Activated CD8-positive, alpha-beta memory T cell treated with anti-CD3 and anti-CD28 coated beads, Interleukin-2, amount 10 ng/mL, durations not matched to agents 7 days and 5 days (primary cell): ENCODE measurements at regions of chr16 and their contacts with region 1.

Region 1: DNA sequence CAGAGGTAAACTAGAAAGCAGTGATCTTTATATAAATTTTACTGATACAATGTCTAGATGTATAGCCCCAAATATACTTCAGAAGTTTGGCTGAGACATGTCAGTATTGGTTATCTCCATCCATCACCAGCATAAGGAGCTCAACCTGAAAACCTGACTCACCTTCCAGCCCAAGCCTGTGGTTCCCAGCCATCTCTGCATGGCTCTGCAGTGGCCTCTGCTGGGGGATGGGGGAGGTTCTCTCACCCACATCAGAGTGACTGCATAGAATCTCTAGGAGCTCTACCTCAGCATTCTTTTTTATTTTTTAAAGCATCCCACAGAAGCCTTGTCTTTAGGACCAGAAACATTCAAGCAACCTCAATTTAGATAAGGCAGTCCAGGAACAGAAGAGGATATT is 27.3 kb downstream of the USP7 start:
- DNase-seq: peak; percentile 88
- ATAC-seq: peak; percentile 99
- H3K4me3 Mint-ChIP-seq: no peak overlapping the region
- H3K27ac Mint-ChIP-seq: peak overlapping the region; percentile 11
- H3K4me1 Mint-ChIP-seq: peaks cover 57% of the 10 kb centered on the region
- H3K27me3 Mint-ChIP-seq: no peaks in the 10 kb centered on the region

Region 2: GRCh38 chr16:8776129-8776584 is 160.3 kb before region 1 on chr16:
- CTCF ChIA-PET with region 1: no interaction called
- DNase-seq: no peak
- ATAC-seq: no peak
- H3K4me3 Mint-ChIP-seq: no peak overlapping the region
- H3K27ac Mint-ChIP-seq: no peak overlapping the region
- H3K4me1 Mint-ChIP-seq: no peaks in the 10 kb centered on the region
- H3K27me3 Mint-ChIP-seq: no peaks in the 10 kb centered on the region

Region 3: DNA sequence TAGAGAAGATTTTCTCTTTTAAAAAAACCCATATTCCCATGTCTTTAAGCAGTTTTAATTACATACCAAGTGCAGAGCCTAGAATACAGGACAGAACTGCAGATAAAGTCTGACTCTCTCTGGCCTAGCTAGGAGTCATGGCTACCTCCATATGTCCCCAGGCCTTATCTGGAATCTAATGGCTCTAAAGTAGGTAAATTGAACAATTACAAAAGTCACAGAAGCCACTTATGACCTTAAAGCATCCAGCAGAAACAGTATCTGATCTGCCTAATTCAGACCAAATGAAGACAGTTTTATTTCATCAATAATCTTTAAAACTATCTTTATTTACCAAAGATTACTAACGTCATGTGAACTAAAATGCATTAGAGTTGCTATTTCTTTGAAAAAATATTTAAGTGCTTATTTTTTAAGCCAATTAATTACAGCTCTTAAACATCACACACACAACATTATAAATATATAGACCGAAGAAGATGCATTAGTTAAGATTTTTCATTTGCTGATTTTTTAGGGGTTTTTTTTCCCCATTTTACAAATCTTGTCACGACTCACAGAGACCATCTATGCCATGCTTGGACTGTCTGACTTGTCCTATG is 110.0 kb before region 1 on chr16:
- CTCF ChIA-PET with region 1: no interaction called
- DNase-seq: no peak
- ATAC-seq: no peak
- H3K4me3 Mint-ChIP-seq: no peak overlapping the region
- H3K27ac Mint-ChIP-seq: no peak overlapping the region
- H3K4me1 Mint-ChIP-seq: peaks cover 6% of the 10 kb centered on the region
- H3K27me3 Mint-ChIP-seq: no peaks in the 10 kb centered on the region

Region 4: GRCh38 chr16:8847623-8848022 is 88.8 kb before region 1 on chr16:
- CTCF ChIA-PET with region 1: no interaction called
- DNase-seq: no peak
- ATAC-seq: no peak
- H3K4me3 Mint-ChIP-seq: no peak overlapping the region
- H3K27ac Mint-ChIP-seq: no peak overlapping the region
- H3K4me1 Mint-ChIP-seq: peaks cover 18% of the 10 kb centered on the region
- H3K27me3 Mint-ChIP-seq: no peaks in the 10 kb centered on the region

Region 5: DNA sequence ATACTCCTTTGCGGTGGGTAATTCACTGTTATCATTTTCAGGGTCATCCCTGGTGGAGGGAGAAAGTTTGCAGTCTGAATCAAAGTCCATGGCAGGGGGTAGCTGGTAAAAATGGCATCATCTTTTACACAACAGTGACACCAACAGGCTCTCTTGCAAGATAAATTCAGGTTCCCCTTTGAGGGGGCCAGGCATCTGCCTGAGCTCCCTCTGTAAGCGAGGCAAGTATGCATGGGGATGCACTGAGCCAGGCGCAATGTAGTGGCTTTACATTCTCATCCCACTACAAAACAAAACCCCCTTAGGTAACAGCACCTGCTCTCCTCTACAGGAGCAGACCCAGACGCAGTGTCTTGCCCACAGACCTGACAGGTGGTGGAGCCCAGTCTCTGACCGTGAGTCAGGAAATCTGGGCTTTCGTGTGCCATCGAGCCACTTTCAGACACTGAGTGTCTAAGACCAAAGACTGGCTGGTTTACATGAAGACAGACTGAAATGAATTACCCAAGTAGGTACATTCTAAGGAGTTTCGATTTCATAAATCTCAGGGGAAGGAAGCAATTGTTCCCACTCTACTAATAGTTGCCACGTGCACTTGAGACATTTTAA is 36.6 kb before region 1 on chr16:
- CTCF ChIA-PET with region 1: interaction called, 11 read pairs
- DNase-seq: no peak
- ATAC-seq: no peak
- H3K4me3 Mint-ChIP-seq: no peak overlapping the region
- H3K27ac Mint-ChIP-seq: no peak overlapping the region
- H3K4me1 Mint-ChIP-seq: no peaks in the 10 kb centered on the region
- H3K27me3 Mint-ChIP-seq: no peaks in the 10 kb centered on the region

Region 6: DNA sequence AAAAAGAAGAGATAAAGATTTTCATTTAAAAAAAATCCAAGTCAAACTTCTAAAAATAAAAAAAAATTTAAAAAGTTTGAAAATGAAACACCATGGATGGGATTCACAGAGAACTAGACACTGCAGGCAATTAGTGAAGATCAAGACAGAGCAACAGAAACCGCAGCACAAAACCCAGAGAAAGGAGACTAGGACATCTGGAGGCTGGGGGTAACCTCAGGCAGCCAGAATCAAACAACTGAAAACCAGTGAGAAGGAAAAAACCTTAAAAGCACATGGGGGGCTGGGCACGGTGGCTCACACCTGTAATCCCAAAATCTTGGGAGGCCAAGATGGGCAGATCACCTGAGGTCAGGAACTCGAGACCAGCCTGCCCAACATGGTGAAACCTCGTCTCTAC is 23.6 kb before region 1 on chr16:
- CTCF ChIA-PET with region 1: interaction called, 12 read pairs
- DNase-seq: no peak
- ATAC-seq: no peak
- H3K4me3 Mint-ChIP-seq: no peak overlapping the region
- H3K27ac Mint-ChIP-seq: no peak overlapping the region
- H3K4me1 Mint-ChIP-seq: peaks cover 58% of the 10 kb centered on the region
- H3K27me3 Mint-ChIP-seq: no peaks in the 10 kb centered on the region

Region 7: DNA sequence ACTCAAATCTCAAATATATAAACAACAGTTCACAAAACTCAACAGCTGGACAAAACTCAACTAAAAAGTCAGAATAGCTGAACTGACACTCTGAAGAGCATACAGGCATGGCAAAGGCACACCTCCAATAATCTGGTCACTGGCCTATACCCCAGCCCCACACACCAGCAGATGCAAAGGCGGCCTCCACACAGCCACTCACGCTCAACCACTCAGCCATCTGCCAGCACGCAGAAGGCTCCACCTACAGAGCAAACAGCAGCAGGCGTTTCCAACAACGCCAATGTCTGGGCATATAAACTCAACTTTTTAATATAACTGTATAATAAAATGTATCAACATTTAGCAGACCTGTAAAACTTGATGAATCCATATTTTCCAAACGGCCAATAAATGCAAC is 10.1 kb after region 1 on chr16:
- CTCF ChIA-PET with region 1: interaction called, 51 read pairs
- DNase-seq: no peak
- ATAC-seq: no peak
- H3K4me3 Mint-ChIP-seq: no peak overlapping the region
- H3K27ac Mint-ChIP-seq: no peak overlapping the region
- H3K4me1 Mint-ChIP-seq: peaks cover 79% of the 10 kb centered on the region
- H3K27me3 Mint-ChIP-seq: no peaks in the 10 kb centered on the region

Region 8: DNA sequence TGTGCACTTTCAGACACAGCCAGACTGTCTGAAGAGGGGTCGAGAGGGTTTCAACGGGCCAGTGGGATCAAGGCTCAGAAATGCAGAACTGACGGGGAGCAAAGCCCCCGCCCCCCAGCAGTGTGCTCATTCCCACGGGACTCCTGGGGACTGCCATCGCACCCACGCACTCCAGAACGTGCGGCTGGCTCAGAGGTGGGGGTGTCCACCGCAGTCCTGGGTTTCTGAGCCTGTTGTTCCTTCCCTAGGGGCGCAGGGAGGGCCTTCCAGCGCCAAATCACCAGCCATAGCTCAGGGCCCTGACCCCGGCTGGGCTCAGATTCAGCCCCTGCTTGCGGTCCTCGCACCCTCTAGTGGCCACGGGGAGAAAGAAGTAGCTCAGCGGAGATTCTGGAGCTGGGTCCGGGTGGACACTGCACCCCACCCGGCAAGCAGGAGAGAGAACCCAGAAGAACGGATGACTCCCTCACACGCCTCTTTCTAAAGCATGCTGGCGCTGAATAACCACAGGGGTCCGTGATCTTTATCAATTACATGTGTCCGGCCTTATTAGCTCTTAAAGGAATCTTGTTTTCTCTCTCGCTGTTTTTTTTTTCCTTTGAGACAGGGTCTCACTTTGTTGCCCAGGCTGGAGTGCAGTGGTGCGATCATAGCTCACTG is 72.3 kb after region 1 on chr16:
- CTCF ChIA-PET with region 1: interaction called, 27 read pairs
- DNase-seq: peak; percentile 78
- ATAC-seq: peak; percentile 98
- H3K4me3 Mint-ChIP-seq: no peak overlapping the region
- H3K27ac Mint-ChIP-seq: no peak overlapping the region
- H3K4me1 Mint-ChIP-seq: peaks cover 6% of the 10 kb centered on the region
- H3K27me3 Mint-ChIP-seq: peaks cover 18% of the 10 kb centered on the region

Region 9: GRCh38 chr16:9134739-9135138 is 198.3 kb after region 1 on chr16:
- CTCF ChIA-PET with region 1: interaction called, 14 read pairs
- DNase-seq: peak; percentile 77
- ATAC-seq: peak; percentile 80
- H3K4me3 Mint-ChIP-seq: no peak overlapping the region
- H3K27ac Mint-ChIP-seq: peak overlapping the region; percentile 37
- H3K4me1 Mint-ChIP-seq: peaks cover 25% of the 10 kb centered on the region
- H3K27me3 Mint-ChIP-seq: peaks cover 2% of the 10 kb centered on the region